ENCODE measurements at regions of chr2 and their contacts with region 1.

Region 1: DNA sequence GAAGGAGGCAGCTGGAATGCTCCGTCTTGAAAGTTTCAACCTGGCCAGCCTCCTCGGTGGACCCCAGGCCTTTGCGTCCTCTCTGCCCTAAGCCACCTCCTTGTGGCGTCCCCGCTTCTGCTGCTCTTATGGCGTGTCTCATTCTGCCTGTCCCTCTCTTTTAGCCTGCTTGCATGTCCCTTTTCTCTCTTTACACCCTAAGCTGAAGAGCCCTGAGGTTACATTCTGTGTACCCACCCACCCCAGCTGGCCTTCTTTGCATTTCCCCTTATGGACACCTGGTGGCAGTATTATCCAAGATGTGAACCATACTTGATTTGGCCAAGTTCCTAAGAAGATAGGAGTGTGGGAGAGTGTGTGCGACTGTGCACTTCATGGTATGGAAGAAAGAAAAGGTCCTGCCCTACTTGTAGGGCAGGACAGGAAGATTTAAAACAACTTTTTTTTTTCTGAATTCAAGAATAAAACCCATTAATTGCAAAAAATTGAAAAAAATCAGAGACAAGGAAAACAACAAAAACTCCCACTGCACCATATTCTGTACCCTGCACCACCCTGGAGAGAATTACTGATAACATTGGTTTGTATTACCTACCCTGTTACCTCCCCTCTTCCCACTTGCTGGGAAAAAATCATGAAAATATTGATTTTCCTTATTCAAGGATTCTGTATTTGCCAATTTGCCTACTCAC is 77.4 kb downstream of the DYSF start:
- DNase-seq: peak in 1 of 2 donors; percentile 56
- H3K4me3 ChIP-seq: no peak overlapping the region
- H3K27ac ChIP-seq: no peak overlapping the region
- H3K4me1 ChIP-seq: no peaks in the 10 kb centered on the region
- H3K27me3 ChIP-seq: no peaks in the 10 kb centered on the region
- CTCF ChIP-seq: peak; percentile 22 to 61 (median 52)

Region 2: DNA sequence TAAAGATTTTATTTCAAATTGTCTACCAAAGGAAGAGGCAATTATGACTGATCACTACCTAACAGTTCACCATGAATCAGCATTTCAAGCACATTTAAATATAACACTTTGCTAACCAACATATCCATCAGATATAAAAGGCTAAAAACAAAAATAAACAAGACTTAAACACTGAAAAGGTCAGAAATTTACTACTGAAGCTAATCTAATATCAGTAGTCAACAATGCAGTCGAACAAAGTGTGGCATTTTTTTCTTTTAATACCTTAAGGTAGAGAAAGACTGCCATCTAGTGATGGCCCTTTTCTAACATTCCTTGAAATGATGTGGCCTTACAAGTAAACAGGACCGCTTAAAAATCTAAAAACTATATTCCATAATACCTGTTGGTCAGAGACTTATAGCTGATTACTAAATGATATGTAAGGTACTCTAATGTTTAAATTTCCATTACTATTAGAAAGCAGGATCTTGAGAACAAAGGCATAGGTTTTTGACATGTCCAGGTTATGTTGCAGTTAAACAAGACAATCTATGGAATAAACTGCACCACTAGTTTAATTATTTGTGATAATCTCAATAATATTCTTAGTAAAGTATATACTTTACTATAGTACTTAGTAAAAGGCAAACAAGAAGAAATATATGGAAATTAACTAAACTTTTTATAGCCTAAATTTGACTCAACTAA is 1215.0 kb after region 1 on chr2:
- intact Hi-C with region 1: loop called (anchors 10 kb)
- DNase-seq: no peak
- H3K4me3 ChIP-seq: no peak overlapping the region
- H3K27ac ChIP-seq: no peak overlapping the region
- H3K4me1 ChIP-seq: no peaks in the 10 kb centered on the region
- H3K27me3 ChIP-seq: no peaks in the 10 kb centered on the region
- CTCF ChIP-seq: peak in 2 of 3 experiments; percentile 46 to 60

Measured in ascending aorta (tissue), 2 donors.